ENCODE measurements at regions of chr9 and their contacts with region 1.

Region 1: GRCh38 chr9:77456829-77457437 is 191.2 kb downstream of the GNA14 start:
- H3K4me3 ChIP-seq: no peak overlapping the region
- H3K27ac ChIP-seq: no peak overlapping the region
- H3K4me1 ChIP-seq: no peaks in the 10 kb centered on the region
- CTCF ChIP-seq: peak; percentile 34; the same call in 1 of the 2 replicates

Region 2: DNA sequence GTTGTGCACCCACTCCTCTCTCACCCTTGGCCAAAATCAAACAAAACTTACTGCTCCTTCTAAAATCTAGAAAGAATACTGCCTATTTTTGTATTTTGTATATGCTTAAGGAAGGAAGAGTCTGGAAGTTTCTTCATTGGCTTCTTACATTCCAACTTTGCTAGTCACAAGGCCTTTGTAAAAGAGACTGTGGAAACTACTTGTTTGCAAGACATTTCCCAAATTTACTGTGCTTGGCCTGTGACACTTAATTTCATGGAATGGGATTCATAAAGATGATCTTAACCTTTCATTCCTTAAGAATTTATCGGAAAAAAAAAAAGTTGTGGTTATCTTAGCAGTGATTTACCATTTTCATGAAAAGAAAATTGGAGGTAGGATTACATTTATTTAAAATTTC is 70.7 kb before region 1 on chr9:
- CTCF ChIA-PET with region 1: no interaction called
- POLR2A ChIA-PET with region 1: no interaction called
- H3K4me3 ChIP-seq: no peak overlapping the region
- H3K27ac ChIP-seq: no peak overlapping the region
- H3K4me1 ChIP-seq: no peaks in the 10 kb centered on the region
- CTCF ChIP-seq: no peak

Region 3: GRCh38 chr9:77417566-77417965 is 39.4 kb before region 1 on chr9:
- CTCF ChIA-PET with region 1: interaction called, 13 read pairs
- POLR2A ChIA-PET with region 1: no interaction called
- H3K4me3 ChIP-seq: no peak overlapping the region
- H3K27ac ChIP-seq: no peak overlapping the region
- H3K4me1 ChIP-seq: no peaks in the 10 kb centered on the region
- CTCF ChIP-seq: no peak

Region 4: DNA sequence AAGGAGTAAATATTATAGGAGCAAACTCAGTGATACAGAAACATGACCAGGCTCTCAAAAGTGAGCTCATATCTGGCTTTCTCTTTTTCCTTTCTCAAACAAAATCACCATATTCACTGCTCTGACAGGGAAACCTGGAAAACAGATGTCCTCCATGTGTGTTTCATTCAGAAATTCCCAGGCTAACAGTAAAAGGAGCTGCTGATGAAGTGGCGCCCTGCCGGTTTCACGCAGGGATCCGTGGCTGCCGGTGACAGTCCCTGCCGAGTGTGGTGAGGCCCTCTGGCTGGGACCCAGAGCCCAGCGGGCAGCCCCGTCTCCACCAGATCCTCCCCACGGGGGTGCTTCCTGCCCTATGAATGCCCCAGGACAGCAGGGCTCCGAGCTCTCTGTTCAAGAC is 16.9 kb before region 1 on chr9:
- CTCF ChIA-PET with region 1: interaction called, 97 read pairs
- POLR2A ChIA-PET with region 1: no interaction called
- H3K4me3 ChIP-seq: no peak overlapping the region
- H3K27ac ChIP-seq: no peak overlapping the region
- H3K4me1 ChIP-seq: no peaks in the 10 kb centered on the region
- CTCF ChIP-seq: no peak

Region 5: GRCh38 chr9:77488439-77489126 is 31.6 kb after region 1 on chr9:
- CTCF ChIA-PET with region 1: interaction called, 60 read pairs
- POLR2A ChIA-PET with region 1: no interaction called
- H3K4me3 ChIP-seq: no peak overlapping the region
- H3K27ac ChIP-seq: no peak overlapping the region
- H3K4me1 ChIP-seq: no peaks in the 10 kb centered on the region
- CTCF ChIP-seq: no peak

Region 6: DNA sequence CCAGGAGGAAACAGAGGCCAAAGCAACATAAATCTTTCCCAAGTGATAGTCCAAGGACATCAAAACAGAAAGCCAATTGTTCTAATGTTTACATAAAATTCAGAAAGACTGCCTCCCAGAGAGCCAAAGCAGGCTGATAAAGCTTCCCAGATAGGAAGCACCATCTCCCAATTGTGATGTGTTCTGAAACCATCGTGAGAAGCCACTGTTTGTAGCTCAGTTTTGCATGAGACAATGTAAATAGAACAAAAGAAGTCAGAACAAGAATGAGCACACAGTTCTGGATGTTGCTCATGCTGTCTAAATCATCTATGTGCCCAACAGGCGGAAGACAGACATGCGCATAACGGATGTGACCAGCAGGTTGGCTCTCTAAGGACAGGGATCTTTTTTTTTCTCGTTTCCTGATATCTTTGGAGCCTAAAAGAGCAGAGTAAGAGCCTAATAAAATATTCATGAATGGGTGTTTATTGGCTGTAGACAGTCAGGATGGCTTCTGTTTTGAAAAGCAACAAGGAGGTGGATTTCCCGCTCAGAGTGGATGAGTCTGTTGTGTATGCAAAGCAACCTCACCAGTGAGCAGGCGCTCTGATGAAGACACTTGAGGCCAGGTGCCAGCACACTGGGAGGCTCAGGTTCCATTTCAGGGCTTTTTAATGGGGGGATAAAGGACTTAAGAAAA is 77.6 kb after region 1 on chr9:
- CTCF ChIA-PET with region 1: interaction called, 10 read pairs
- POLR2A ChIA-PET with region 1: no interaction called
- H3K4me3 ChIP-seq: no peak overlapping the region
- H3K27ac ChIP-seq: no peak overlapping the region
- H3K4me1 ChIP-seq: no peaks in the 10 kb centered on the region; the same call in 1 of the 2 replicates
- CTCF ChIP-seq: no peak

Region 7: DNA sequence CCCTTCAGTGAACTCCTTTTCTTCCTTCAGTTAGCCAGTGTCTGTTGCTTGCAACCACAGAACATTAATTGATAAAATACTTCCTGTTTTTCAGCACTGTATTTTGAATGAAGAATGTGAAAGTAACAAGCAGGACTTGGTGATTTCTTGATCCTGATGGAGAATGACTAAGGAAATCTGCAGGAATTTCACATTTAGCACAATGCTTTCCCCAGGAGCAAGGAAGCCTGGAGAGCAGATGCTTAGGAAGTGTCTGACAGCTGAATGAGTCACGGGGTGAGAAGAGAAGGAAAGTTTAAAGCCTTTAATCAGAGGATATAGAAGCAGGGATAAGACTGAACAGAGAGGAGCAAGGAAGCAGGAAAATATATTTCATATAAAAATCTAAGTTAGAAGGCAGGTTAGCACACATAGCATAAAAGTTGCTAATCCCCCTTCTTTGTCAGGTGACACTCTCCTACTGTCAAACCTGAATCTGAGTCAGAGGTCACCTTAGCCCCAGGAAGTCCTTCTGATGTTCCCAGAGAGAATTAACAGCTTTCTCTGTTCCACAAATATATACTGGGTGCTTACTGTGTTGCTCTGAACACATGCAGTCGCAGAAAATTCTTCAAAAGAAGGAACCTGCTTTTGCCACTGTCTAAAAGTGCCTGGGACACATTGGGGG is 131.5 kb after region 1 on chr9:
- CTCF ChIA-PET with region 1: no interaction called
- POLR2A ChIA-PET with region 1: no interaction called
- H3K4me3 ChIP-seq: no peak overlapping the region
- H3K27ac ChIP-seq: no peak overlapping the region
- H3K4me1 ChIP-seq: no peaks in the 10 kb centered on the region
- CTCF ChIP-seq: no peak

Region 8: DNA sequence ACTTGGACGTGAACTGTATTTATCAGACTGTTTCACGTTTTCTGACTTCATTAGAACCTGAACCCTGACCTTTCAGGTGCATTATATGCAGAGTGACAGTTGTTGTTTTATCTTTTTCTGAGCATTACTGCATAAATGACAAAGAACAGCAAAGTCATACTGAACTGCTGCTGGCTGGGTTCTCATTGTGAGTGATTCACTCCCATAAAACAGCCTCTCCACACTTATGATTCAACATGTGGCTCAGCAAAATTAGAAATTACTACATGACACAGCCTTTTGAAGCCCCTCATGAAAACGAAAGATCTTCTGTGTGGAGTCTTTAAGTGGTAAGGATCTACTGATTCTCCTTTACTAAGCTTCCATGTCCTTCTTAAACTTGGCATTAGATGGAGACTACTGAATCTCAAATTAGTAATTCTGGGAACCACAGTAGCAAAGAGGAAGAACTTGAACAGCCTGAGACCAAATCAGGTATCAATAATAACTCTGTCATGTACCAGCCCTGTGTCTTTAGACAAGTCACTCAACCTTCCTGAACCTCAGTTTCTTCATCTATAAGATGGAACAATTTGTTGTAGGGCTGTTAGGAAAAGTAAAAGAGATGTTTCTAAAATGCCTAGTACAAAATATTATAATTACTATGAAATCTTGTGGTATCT is 363.5 kb after region 1 on chr9:
- CTCF ChIA-PET with region 1: no interaction called
- POLR2A ChIA-PET with region 1: no interaction called
- H3K4me3 ChIP-seq: no peak overlapping the region
- H3K27ac ChIP-seq: no peak overlapping the region
- H3K4me1 ChIP-seq: 0 out of 2 replicates have a peak, but pooled peaks cover 3% of the 10 kb centered on the region
- CTCF ChIP-seq: no peak

Region 9: DNA sequence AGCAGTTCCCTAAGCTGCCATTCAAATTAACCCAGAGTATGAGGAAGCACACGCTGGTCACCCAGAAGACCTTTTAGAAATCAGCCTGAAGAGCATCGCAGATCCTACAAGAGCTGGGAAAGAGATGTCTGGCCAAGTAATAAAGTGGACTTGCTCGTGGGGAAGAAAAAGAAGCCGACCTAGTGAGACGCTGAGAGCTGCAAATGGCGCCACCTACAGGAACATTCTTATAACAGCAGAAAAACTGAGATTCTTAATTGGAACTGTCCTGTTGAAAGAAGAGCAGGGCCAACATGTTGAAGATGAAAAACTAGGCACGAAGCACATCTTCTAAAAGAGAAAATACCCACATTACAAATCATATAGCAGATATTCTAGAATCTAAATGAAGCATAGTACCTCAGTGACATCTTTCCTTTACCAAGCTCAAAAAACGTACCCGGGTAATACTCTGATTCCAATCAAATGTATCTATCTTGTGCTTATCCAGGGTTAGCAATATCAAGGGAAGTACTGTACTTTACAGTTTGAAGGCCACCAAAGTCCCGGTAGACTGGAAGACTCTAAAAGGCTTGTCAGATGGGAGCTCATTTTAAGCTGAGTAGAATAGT is 578.6 kb after region 1 on chr9:
- CTCF ChIA-PET with region 1: interaction called, 15 read pairs
- POLR2A ChIA-PET with region 1: no interaction called
- H3K4me3 ChIP-seq: no peak overlapping the region
- H3K27ac ChIP-seq: no peak overlapping the region
- H3K4me1 ChIP-seq: no peaks in the 10 kb centered on the region
- CTCF ChIP-seq: no peak